AG04449 (cell line): ENCODE measurements at regions of chr4 and their contacts with region 1.

Region 1: GRCh38 chr4:76179398-76180318 is 31.5 kb upstream of the NUP54 start:
- DNase-seq: no peak
- H3K4me3 ChIP-seq: no peak overlapping the region
- CTCF ChIP-seq: peak; percentile 86

Region 2: GRCh38 chr4:76028350-76028765 is 151.3 kb before region 1 on chr4:
- CTCF ChIA-PET with region 1: no interaction called
- POLR2A ChIA-PET with region 1: no interaction called
- DNase-seq: no peak
- H3K4me3 ChIP-seq: no peak overlapping the region
- CTCF ChIP-seq: no peak

Region 3: GRCh38 chr4:76156635-76157034 is 23.0 kb before region 1 on chr4:
- CTCF ChIA-PET with region 1: interaction called, 57 read pairs
- POLR2A ChIA-PET with region 1: interaction called, 4 read pairs
- DNase-seq: no peak
- H3K4me3 ChIP-seq: no peak overlapping the region
- CTCF ChIP-seq: no peak

Region 4: DNA sequence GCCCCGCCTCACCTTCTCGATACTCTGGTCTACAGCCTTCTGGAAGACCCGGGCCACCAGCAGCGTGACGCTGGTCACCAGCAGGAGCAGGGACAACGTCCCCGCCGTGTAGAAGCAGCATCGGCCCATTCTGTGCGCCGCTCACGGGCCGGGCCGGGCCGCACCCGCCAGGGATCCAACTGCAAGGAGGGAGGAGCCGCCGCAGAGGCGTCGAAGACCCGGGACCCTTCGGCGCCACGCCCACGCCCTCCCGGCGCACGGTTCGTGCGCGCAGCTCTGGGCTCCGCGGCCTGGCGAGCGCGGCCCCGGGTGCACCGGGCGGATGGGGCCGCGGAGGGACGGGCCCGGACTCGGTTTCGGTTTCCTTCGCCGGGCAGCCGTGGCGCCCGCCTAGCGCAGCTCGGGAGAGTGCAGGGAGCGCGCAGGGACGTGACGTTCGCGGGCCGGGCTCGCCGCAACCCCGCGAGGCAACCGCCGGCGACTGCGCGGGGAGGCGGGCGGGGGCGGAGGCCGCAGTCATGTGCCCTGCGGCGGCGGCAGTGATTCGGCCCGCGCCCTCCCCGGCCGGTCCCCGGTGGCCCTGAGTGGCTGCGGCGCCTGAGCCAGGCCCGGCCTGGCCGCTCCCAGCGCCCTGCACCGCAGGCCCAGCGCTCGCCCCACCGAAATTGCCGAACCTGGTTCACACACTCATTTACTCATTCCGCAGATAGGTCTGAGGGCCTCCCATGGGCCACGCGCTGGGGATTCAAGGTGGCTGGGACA is 33.9 kb after region 1 on chr4 and contains the start of gene SCARB2:
- CTCF ChIA-PET with region 1: interaction called, 82 read pairs
- POLR2A ChIA-PET with region 1: no interaction called
- DNase-seq: no peak
- H3K4me3 ChIP-seq: peak within 1 kb of the TSS; percentile 82
- CTCF ChIP-seq: no peak

Region 5: DNA sequence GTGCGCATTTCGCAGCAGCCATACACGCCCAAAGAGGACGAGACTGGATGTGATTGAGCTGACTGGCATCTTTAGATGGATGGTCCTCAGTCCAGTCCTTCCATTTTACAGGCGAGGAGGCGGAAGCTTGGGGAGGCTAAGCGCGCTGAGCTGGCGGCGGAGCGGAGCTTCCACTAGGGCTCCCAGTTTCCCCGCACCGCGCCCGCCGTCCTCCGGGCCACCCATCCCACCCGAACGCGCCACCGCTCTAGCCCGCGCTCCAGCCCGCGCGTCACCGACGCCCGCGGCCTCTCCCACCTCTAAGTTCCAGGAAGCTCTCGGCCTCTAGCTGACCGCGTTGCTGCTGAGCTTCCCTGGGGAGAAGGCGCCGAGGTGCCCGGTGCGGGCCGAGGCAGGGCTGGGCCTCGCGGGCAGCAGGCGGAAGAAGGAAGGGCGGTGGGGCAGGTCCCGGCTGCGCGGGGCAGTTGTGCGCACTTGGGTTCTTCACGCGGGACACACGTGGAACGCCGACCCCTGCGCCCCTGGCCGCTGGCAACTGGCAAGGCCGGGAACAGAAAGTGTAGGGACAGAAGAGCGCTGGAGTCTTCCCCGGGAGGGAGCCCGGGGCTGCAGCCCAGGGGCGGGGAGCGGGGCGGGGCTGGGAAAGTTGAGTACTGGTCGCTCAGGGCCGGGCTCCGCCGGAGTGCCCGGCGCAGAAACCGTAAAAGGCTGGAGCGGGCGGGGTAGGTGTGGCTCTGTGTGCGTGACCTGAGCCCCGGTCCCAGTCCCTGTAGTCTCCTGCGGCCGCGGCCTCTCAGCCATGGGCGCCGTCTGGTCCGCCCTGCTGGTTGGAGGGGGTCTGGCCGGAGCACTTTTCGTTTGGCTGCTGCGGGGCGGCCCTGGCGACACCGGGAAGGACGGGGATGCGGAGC is 126.6 kb after region 1 on chr4 and contains the start of gene STBD1:
- CTCF ChIA-PET with region 1: interaction called, 73 read pairs
- POLR2A ChIA-PET with region 1: no interaction called
- DNase-seq: no peak
- H3K4me3 ChIP-seq: peak within 1 kb of the TSS; percentile 79
- CTCF ChIP-seq: no peak

Region 6: GRCh38 chr4:76420762-76421581 is 241.3 kb after region 1 on chr4 and contains the start of gene CCDC158:
- CTCF ChIA-PET with region 1: interaction called, 21 read pairs
- POLR2A ChIA-PET with region 1: no interaction called
- DNase-seq: no peak
- H3K4me3 ChIP-seq: peak within 1 kb of the TSS; percentile 48
- CTCF ChIP-seq: no peak

Region 7: GRCh38 chr4:76504613-76505465 is 325.2 kb after region 1 on chr4:
- CTCF ChIA-PET with region 1: interaction called, 35 read pairs
- POLR2A ChIA-PET with region 1: no interaction called
- DNase-seq: no peak
- H3K4me3 ChIP-seq: no peak overlapping the region
- CTCF ChIP-seq: peak; percentile 44